ENCODE measurements at regions of chr1 and their contacts with region 1.

Region 1: DNA sequence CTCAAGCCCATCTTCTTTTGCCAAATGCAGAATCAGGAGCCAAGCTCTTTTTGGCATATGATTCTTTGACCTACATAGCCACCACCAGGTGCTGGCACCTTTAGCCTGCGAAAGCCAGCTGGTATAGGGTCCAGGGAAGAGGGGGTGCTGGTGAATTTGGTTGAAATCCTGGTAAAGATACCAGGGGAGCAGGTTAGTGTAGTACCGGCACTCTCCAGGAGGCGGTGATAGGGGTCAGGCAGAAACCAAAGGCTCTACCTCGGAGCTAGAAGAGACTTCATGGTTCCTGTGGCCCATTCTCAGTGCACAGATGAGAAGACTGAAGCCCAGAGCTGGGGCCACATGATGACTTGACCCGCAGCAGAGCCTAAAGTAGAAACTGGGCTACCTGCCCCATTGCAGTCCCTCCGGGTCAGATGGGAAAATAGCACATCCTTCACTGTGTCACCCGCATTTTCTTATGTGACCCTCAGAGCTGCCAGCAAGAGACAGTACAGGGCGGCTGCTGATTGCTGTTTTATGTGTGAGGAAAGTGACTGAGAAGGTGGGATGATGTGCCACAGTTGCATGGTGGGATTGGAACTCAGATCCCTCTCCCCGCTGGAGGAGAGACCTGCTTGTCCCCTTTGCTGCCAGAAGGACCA is 36.0 kb upstream of the IL19 start:
- DNase-seq: peak; percentile 74
- ATAC-seq: peak; percentile 69
- H3K4me3 Mint-ChIP-seq: no peak overlapping the region
- H3K27ac Mint-ChIP-seq: peak overlapping the region; percentile 24
- H3K4me1 Mint-ChIP-seq: peaks cover 43% of the 10 kb centered on the region
- H3K27me3 Mint-ChIP-seq: no peaks in the 10 kb centered on the region
- CTCF ChIP-seq: peak; percentile 41

Region 2: GRCh38 chr1:206766251-206766856 is 31.7 kb after region 1 on chr1:
- CTCF ChIA-PET with region 1: interaction called, 49 read pairs
- POLR2A ChIA-PET with region 1: interaction called, 10 read pairs
- intact Hi-C with region 1: loop called (anchors 1 kb)
- DNase-seq: no peak
- ATAC-seq: peak; percentile 64
- H3K4me3 Mint-ChIP-seq: peak overlapping the region; percentile 42
- H3K27ac Mint-ChIP-seq: peak overlapping the region; percentile 73
- H3K4me1 Mint-ChIP-seq: peaks cover 51% of the 10 kb centered on the region
- H3K27me3 Mint-ChIP-seq: no peaks in the 10 kb centered on the region
- CTCF ChIP-seq: no peak

Region 3: DNA sequence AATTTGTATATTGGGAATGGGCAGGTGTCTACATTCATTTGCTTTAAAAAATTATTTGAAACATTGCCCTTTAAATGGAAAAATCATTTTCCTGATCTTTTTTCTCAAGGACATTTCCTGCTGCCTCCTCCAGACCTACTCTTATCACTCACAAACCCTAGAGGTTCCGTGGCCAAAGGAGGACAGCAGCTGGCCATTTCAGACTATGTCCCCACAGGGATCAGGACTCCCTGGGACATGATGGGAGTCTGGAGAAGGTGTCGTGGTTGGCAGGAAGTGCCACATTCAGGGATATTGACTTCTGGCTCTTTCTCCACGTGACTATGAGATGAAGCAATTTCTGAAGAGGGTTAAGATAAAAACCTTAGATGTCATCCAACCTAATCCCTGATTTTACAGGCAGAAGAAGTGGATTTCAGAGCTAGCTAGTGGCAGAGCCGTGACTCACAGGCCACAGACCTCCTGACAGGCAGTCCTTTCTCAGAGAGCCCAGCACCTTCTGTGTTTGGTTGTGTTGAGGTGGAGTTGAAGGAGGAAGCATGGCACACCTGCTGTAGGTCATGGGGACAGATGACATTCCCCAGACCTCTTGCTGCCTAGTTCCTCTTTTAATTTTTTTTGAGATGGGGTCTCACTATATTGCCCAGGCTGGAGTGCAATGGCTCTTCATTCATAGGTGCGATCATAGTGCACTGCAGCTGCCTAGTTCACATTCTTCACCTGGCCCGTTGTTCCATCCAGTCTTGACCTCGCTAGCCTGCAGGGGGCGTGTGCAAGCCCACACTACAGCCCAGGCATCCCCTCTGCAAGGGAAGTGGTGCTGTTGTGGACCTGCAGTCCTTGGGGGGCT is 63.1 kb after region 1 on chr1:
- CTCF ChIA-PET with region 1: interaction called, 252 read pairs
- POLR2A ChIA-PET with region 1: interaction called, 9 read pairs
- intact Hi-C with region 1: no loop called
- DNase-seq: no peak
- ATAC-seq: peak; percentile 25
- H3K4me3 Mint-ChIP-seq: no peak overlapping the region
- H3K27ac Mint-ChIP-seq: no peak overlapping the region
- H3K4me1 Mint-ChIP-seq: peaks cover 73% of the 10 kb centered on the region
- H3K27me3 Mint-ChIP-seq: no peaks in the 10 kb centered on the region
- CTCF ChIP-seq: no peak

Region 4: DNA sequence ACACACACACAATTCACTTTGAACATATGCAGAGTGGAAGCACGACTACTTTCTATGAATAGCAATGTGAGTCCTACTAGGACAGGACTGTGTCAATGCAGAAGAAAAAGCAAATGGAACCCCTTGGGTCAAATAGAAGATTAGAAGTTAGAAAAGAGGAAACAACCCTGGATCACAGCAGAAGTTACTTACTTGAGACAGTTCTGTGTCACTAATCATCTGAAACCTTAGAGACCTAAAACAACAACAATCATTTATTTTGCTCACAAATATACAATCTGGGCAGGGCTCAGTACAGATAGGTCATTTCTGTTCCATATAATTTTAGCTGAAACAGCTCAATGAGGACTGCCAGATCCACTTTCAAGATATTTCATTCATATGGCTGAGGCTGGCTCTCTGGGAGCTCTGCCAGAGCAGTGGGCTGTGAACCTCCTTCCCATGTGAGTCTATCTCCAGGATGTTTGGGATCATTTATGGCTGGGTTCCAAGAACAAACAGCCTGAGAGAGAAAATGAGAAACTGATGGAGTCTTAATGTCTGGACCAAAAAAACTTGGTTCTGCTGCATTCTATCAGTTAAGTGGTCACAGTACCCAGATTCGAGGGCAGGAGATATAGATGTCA is 80.2 kb after region 1 on chr1:
- CTCF ChIA-PET with region 1: interaction called, 252 read pairs
- POLR2A ChIA-PET with region 1: interaction called, 5 read pairs
- intact Hi-C with region 1: no loop called
- DNase-seq: no peak
- ATAC-seq: peak; percentile 69
- H3K4me3 Mint-ChIP-seq: peak overlapping the region; percentile 44
- H3K27ac Mint-ChIP-seq: peak overlapping the region; percentile 73
- H3K4me1 Mint-ChIP-seq: peaks cover 47% of the 10 kb centered on the region
- H3K27me3 Mint-ChIP-seq: no peaks in the 10 kb centered on the region
- CTCF ChIP-seq: no peak

Region 5: DNA sequence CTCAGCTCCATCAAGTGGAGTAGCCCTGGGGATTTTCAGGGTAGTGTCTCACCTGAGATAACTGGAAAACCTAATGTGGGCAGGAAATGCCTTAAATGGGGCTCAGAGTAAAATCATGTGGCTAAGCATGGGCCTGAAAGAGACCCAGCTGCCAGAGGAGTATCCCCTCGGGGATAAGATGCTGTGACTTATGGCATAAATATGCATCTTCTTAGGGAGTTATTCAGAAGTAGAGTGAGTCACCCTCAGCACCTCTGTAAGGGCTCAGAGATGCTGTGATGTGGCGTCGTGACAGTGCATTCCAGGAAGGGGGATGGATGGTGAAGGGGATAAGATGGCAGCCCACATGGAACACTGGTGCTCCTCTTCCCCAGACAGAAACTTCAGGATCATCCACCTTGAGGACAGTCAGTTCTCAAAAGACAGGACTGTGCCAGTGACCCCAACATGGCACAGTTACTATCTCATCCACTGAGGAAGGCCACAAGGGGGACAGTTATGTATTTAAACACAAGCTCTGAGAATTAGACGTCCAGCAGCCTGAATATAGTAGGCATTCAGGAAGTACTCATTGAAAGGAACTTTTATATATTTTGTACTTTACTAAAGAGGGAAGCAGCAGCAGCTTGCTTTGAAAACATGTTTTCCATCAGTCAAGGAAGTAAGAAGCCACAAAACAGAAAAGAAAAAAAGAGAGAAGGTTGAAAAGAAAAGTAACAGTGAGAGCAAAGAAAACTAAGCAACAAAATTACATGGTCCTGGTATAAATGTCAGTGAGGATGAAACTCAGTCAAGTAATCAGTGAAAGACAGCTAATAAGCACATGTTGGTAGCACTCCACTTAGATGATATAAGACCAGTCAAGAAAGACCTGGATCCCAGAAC is 170.9 kb after region 1 on chr1:
- CTCF ChIA-PET with region 1: interaction called, 31 read pairs
- POLR2A ChIA-PET with region 1: interaction called, 6 read pairs
- intact Hi-C with region 1: no loop called
- DNase-seq: no peak
- ATAC-seq: peak; percentile 93
- H3K4me3 Mint-ChIP-seq: peak overlapping the region; percentile 36
- H3K27ac Mint-ChIP-seq: peak overlapping the region; percentile 89
- H3K4me1 Mint-ChIP-seq: peaks cover 77% of the 10 kb centered on the region
- H3K27me3 Mint-ChIP-seq: no peaks in the 10 kb centered on the region
- CTCF ChIP-seq: no peak

Region 6: DNA sequence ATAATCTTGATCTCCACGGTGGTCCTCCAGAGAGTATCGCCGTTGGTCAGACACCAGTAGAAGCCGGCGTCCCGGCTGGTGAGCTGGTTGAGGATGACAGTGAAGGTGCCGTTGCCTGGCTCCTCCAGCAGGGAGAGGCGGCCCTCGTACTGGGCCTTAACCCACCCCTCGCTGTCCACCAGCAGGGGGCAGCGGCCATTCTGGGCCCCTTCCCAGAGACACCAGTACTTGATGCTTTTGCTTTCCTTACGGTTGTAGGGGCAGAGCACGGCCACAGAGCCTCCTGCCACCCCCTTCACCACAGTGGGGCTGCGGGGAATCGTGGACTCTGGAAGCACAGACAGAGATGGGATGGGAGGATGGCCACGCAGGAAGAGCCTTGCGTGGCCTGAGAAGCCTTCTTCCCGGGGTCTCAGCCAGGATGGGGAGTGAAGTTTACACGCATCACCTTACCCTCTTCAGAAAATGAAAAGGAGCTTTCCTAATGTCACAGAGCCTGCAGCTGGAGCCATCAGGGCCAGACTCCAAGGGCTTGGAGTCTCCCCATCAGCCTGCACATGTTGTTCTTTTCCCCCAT is 201.0 kb after region 1 on chr1:
- CTCF ChIA-PET with region 1: interaction called, 41 read pairs
- POLR2A ChIA-PET with region 1: interaction called, 4 read pairs
- intact Hi-C with region 1: loop called (anchors 1 kb)
- DNase-seq: peak; percentile 41
- ATAC-seq: no peak
- H3K4me3 Mint-ChIP-seq: no peak overlapping the region
- H3K27ac Mint-ChIP-seq: no peak overlapping the region
- H3K4me1 Mint-ChIP-seq: peaks cover 34% of the 10 kb centered on the region
- H3K27me3 Mint-ChIP-seq: no peaks in the 10 kb centered on the region
- CTCF ChIP-seq: no peak